Breast epithelium (tissue), 4 donors: ENCODE measurements at regions of chr3 and their contacts with region 1.

Region 1: DNA sequence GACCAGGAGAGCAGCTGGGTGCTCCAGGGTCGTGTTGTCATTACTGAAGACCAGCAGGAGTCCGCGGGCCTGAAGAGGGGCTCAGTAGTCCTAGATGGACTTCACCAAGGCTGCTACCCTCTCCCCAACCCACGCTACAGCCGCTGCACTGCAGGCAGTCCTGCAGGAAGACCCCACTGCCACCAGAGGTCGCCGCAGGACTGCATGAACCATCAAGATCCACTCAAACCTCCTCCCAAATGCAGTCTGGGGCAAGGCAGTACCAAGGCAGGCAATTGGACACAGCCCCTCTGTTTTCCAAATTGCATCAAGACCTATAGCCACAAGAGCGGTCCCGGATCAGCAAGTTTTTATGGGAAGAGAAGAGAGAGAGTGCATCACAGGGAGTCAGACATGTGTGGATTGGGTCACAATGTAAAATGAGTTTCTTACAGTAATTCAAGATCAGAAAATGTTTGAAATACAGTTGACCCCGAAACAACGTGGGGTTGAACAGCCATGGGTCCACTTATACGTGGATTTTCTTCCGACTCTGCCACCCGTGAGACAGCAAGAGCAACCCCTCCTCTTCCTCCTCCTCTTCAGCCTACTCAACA is 46.7 kb downstream of the DZIP1L start:
- DNase-seq: peak; percentile 56 to 73
- H3K4me3 ChIP-seq: no peak overlapping the region
- H3K27ac ChIP-seq: no peak overlapping the region
- H3K4me1 ChIP-seq: no peaks in the 10 kb centered on the region
- H3K27me3 ChIP-seq: no peaks in the 10 kb centered on the region
- CTCF ChIP-seq: peak; percentile 63 to 95 (median 88)
- POLR2A ChIP-seq: no peak

Region 2: GRCh38 chr3:138051946-138052802 is 16.5 kb before region 1 on chr3:
- intact Hi-C with region 1: no loop called
- DNase-seq: no peak
- H3K4me3 ChIP-seq: no peak overlapping the region
- H3K27ac ChIP-seq: no peak overlapping the region
- H3K4me1 ChIP-seq: no peaks in the 10 kb centered on the region
- H3K27me3 ChIP-seq: no peaks in the 10 kb centered on the region
- CTCF ChIP-seq: peak in 1 of 3 donors; percentile 31
- POLR2A ChIP-seq: no peak

Region 3: DNA sequence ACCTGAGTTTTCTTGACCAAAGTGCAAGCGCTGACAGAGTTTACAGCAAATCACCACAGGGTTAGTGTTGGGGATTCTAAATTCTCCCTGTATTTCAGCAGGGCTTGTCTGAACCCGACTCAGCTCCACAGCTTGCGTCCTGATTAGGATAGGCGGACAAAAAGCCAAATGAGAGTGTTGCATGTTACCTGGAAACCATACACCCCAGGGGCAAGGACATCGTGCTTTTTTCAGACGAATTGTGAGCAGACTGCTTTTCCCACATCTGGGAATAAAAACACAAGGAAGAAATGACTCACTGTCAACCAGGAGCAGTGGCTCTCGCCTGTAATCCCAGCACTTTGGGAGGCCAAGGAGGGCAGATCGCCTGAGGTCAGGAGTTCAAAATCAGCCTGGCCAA is 43.7 kb after region 1 on chr3:
- intact Hi-C with region 1: loop called (anchors 2 kb)
- DNase-seq: peak in 1 of 2 donors; percentile 66
- H3K4me3 ChIP-seq: no peak overlapping the region
- H3K27ac ChIP-seq: peak overlapping the region; percentile 85 to 90
- H3K4me1 ChIP-seq: no peaks in the 10 kb centered on the region
- H3K27me3 ChIP-seq: no peaks in the 10 kb centered on the region
- CTCF ChIP-seq: no peak
- POLR2A ChIP-seq: no peak

Region 4: DNA sequence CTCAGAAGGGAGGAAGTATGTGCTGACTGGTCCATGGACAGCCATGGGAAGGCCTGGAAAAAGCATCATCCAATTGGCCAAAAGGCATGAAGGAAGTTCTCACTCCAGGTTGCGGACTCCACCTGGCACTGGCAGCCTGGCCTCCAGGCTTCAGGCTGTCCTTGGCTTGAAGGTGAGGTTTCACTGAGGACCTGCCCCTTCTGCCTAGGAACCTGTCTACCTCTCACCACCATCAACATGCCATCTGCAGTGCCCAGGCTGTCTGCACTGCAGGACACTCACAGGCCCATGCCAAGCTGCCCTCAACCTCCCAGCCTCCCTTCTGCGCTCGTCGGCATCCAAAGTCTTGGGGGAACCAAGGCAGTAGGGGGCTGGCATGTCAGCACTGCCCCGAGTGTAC is 474.3 kb after region 1 on chr3:
- intact Hi-C with region 1: loop called (anchors 5 kb)
- DNase-seq: no peak
- H3K4me3 ChIP-seq: no peak overlapping the region
- H3K27ac ChIP-seq: no peak overlapping the region
- H3K4me1 ChIP-seq: no peaks in the 10 kb centered on the region
- H3K27me3 ChIP-seq: no peaks in the 10 kb centered on the region
- CTCF ChIP-seq: no peak
- POLR2A ChIP-seq: no peak